ENCODE measurements at regions of chr2 and their contacts with region 1.

Region 1: GRCh38 chr2:113138428-113139322 is 11.3 kb downstream of the IL1RN start:
- DNase-seq: peak; percentile 16 to 79 (median 64)
- H3K4me3 ChIP-seq: no peak overlapping the region
- H3K4me3 Mint-ChIP-seq: peak overlapping the region in 6 of 7 donors; percentile 60 to 77 (median 72)
- H3K27ac ChIP-seq: no peak overlapping the region
- H3K27ac Mint-ChIP-seq: peak overlapping the region; percentile 5 to 90 (median 52)
- H3K4me1 ChIP-seq: peaks cover 14% of the 10 kb centered on the region
- H3K4me1 Mint-ChIP-seq: peaks cover 13 to 22% (median 21%) of the 10 kb centered on the region in 3 donors
- H3K27me3 ChIP-seq: no peaks in the 10 kb centered on the region
- H3K27me3 Mint-ChIP-seq: no peaks in the 10 kb centered on the region

Region 2: DNA sequence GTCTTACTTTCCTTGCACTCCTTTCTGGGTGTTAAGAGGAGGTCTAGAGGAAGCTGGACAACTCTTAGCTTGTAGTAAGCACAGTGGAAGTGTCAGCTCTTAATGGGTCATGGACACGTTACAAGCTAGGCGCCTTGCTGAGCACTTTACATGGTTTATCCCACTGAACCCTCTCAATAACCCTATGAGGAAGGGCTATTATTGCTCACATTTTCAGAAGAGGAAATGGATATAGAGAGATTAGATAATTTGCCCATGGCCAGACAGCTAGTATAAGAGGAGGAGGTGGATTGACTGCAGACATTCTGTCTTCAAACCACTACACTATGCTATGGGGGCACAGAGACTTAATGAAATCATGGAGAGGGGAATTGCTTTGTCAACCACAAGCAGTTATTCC is 19.6 kb before region 1 on chr2:
- CTCF ChIA-PET with region 1: interaction called, 15 read pairs
- POLR2A ChIA-PET with region 1: no interaction called
- DNase-seq: no peak
- H3K4me3 ChIP-seq: no peak overlapping the region
- H3K4me3 Mint-ChIP-seq: no peak overlapping the region
- H3K27ac ChIP-seq: no peak overlapping the region
- H3K27ac Mint-ChIP-seq: no peak overlapping the region
- H3K4me1 ChIP-seq: peaks cover 12% of the 10 kb centered on the region
- H3K4me1 Mint-ChIP-seq: peaks cover 5 to 18% (median 10%) of the 10 kb centered on the region in 3 donors
- H3K27me3 ChIP-seq: no peaks in the 10 kb centered on the region
- H3K27me3 Mint-ChIP-seq: peaks cover 2 to 16% of the 10 kb centered on the region in 2 donors

Region 3: GRCh38 chr2:113157118-113157896 is 18.6 kb after region 1 on chr2:
- CTCF ChIA-PET with region 1: interaction called, 51 read pairs
- POLR2A ChIA-PET with region 1: interaction called, 6 read pairs
- DNase-seq: peak in 4 of 5 donors; percentile 30 to 66 (median 48)
- H3K4me3 ChIP-seq: peak overlapping the region; percentile 71
- H3K4me3 Mint-ChIP-seq: peak overlapping the region; percentile 85 to 94 (median 90)
- H3K27ac ChIP-seq: peak overlapping the region; percentile 24
- H3K27ac Mint-ChIP-seq: peak overlapping the region in 7 of 8 donors; percentile 22 to 92 (median 81)
- H3K4me1 ChIP-seq: peaks cover 25% of the 10 kb centered on the region
- H3K4me1 Mint-ChIP-seq: peaks cover 17 to 31% (median 27%) of the 10 kb centered on the region in 3 donors
- H3K27me3 ChIP-seq: no peaks in the 10 kb centered on the region
- H3K27me3 Mint-ChIP-seq: no peaks in the 10 kb centered on the region

Region 4: DNA sequence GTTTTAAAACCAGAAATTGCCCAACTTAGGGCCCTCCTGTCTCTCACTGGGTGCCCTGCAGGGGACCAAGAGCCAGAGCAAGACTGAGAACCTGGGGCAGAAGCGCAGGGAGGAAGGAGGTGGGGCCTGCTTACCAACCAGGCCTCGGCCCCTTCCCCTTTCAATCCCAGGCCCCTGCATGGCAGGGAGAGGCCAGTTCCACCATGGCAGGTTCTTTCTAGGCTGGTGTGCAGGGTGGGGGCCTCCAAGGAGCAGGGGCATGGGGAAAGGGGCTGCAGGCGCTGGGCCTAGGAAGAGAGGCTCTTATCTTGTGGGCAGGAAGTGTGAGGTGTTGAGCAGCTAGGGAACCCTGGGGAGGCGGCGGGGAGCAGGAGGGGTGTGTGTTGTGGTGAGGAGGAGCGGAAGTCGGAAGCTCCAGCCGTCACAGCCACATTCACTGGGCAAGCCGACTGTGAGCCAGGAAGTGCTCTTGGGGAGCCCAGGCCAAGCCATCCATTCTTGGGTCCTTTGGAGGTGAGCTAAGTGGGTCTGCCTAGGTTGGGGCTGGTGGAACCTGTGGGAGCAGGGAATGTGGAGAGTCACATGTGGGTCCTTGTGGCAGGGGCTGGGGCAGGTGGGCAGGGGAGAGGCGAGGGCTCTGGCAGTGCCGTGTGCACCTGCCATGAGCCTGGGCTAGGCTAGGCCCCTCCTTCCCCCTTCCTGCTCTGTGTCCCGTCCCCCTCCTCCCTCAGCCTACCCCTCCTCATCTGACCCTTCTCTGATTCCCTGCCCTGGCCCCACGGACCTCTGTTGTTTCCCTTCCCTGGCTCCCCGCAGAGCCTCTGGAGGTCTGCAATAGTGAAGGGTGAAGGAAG is 35.1 kb after region 1 on chr2 and contains the start of gene PSD4:
- CTCF ChIA-PET with region 1: interaction called, 117 read pairs
- POLR2A ChIA-PET with region 1: no interaction called
- DNase-seq: peak; percentile 77 to 94 (median 91)
- H3K4me3 ChIP-seq: peak within 1 kb of the TSS; percentile 88
- H3K4me3 Mint-ChIP-seq: peak within 1 kb of the TSS; percentile 89 to 95 (median 93)
- H3K27ac ChIP-seq: peak within 1 kb of the TSS; percentile 77
- H3K27ac Mint-ChIP-seq: peak within 1 kb of the TSS; percentile 86 to 98 (median 94)
- H3K4me1 ChIP-seq: peaks cover 76% of the 10 kb centered on the region
- H3K4me1 Mint-ChIP-seq: peaks cover 70 to 87% (median 76%) of the 10 kb centered on the region in 3 donors
- H3K27me3 ChIP-seq: no peaks in the 10 kb centered on the region
- H3K27me3 Mint-ChIP-seq: peaks cover 0 to 3% of the 10 kb centered on the region in 2 donors
- total RNA-seq, gene PSD4: 192 to 193 TPM

Region 5: DNA sequence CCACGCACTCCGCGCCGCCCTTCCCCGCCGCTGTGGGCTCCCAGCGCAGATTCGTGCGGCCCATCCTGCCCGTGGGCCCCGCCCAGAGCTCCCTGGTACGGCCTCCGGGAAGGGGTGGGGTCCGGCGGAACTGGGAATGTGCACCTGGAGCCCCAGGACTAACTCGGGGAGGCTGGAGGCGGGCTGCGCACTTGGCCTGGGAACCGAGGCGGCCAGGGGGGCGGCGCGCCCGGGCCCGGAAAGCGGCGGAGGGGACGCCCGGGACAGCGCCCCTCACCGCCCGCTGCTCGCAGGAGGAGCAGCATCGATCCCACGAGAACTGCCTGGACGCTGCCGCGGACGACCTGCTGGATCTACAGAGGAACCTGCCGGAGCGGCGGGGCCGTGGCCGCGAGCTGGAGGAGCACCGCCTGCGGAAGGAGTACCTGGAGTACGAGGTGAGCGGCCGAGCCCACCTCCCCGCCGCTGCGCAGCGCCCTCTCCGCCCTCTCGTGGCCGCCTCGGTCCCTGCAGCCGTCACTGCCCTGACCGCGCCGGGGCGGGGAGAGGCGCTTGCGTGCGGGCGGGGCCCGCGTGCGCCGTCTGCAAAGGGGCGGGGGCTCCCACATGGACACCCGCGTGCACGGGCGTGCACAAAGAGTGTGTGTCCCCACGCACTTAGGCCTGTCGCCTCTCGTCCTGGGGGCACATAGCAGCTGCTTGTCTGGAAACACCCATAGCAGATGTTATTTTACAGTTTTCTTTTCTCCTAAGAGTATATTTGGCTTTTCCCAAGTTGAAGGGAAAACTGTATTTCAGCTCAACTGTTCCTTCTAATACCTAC is 60.3 kb after region 1 on chr2:
- CTCF ChIA-PET with region 1: interaction called, 470 read pairs
- POLR2A ChIA-PET with region 1: interaction called, 14 read pairs
- DNase-seq: peak; percentile 56 to 83 (median 63)
- H3K4me3 ChIP-seq: no peak overlapping the region
- H3K4me3 Mint-ChIP-seq: no peak overlapping the region
- H3K27ac ChIP-seq: no peak overlapping the region
- H3K27ac Mint-ChIP-seq: peak overlapping the region in 3 of 8 donors; percentile 17 to 75 (median 64)
- H3K4me1 ChIP-seq: peaks cover 10% of the 10 kb centered on the region
- H3K4me1 Mint-ChIP-seq: peaks cover 12 to 40% (median 17%) of the 10 kb centered on the region in 3 donors
- H3K27me3 ChIP-seq: no peaks in the 10 kb centered on the region
- H3K27me3 Mint-ChIP-seq: no peaks in the 10 kb centered on the region

Region 6: DNA sequence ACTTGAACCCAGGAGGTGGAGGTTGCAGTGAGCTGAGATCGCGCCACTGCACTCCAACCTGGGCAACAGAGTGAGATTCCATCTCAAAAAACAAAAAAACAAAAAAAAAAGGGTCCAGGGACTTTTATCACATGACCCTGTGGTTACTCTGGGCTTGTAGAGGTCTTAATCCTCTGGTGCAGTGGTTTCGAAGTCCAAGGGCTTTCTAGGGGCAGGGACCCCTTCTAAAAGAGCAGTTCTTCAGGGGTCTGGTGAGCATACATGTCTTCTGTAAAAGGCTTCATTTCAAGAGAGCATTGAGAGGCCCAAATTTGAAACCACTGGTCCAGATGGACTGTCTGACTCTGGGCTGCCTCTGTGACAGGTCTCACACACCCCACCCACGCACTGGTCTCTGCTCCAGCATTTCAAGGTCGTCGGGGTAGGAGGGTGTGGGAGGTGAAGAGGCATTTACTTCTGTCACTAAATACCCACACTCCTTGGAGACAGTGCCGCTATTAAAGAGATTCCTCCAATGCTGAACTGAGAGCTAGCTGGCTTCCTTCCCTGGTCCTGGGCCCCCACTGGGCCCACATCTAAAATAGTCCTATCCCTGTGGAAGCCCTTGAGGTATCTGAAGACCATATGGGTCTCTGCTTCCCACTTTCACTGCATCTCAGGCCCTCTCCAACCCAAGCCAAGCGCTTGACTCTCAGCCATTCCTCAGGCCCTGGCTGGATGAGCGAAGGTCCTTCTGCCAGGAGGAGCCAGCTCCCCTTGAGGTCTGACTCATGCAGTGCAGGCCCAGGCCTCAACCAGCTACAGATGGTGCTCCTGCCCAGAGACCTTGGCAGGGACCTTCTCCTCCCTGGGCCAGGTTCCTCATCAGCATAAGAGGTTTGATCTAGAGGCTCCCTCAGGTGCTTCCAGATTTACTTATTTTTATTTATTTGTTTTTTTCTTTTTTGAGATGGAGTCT is 95.2 kb after region 1 on chr2:
- CTCF ChIA-PET with region 1: interaction called, 10 read pairs
- POLR2A ChIA-PET with region 1: no interaction called
- DNase-seq: no peak
- H3K4me3 ChIP-seq: no peak overlapping the region
- H3K4me3 Mint-ChIP-seq: peak overlapping the region in 1 of 7 donors; percentile 9
- H3K27ac ChIP-seq: no peak overlapping the region
- H3K27ac Mint-ChIP-seq: peak overlapping the region in 1 of 8 donors; percentile 4
- H3K4me1 ChIP-seq: no peaks in the 10 kb centered on the region
- H3K4me1 Mint-ChIP-seq: peaks cover 0 to 36% (median 14%) of the 10 kb centered on the region in 3 donors
- H3K27me3 ChIP-seq: no peaks in the 10 kb centered on the region
- H3K27me3 Mint-ChIP-seq: no peaks in the 10 kb centered on the region

Region 7: GRCh38 chr2:113390124-113390849 is 251.6 kb after region 1 on chr2:
- CTCF ChIA-PET with region 1: interaction called, 24 read pairs
- POLR2A ChIA-PET with region 1: no interaction called
- DNase-seq: peak; percentile 11 to 81 (median 72)
- H3K4me3 ChIP-seq: peak overlapping the region; percentile 51
- H3K4me3 Mint-ChIP-seq: peak overlapping the region; percentile 63 to 85 (median 73)
- H3K27ac ChIP-seq: no peak overlapping the region
- H3K27ac Mint-ChIP-seq: peak overlapping the region in 7 of 8 donors; percentile 14 to 75 (median 52)
- H3K4me1 ChIP-seq: peaks cover 4% of the 10 kb centered on the region
- H3K4me1 Mint-ChIP-seq: peaks cover 11 to 16% (median 11%) of the 10 kb centered on the region in 3 donors
- H3K27me3 ChIP-seq: no peaks in the 10 kb centered on the region
- H3K27me3 Mint-ChIP-seq: peaks cover 0 to 18% of the 10 kb centered on the region in 2 donors